ENCODE measurements at regions of chr4 and their contacts with region 1.

Region 1: DNA sequence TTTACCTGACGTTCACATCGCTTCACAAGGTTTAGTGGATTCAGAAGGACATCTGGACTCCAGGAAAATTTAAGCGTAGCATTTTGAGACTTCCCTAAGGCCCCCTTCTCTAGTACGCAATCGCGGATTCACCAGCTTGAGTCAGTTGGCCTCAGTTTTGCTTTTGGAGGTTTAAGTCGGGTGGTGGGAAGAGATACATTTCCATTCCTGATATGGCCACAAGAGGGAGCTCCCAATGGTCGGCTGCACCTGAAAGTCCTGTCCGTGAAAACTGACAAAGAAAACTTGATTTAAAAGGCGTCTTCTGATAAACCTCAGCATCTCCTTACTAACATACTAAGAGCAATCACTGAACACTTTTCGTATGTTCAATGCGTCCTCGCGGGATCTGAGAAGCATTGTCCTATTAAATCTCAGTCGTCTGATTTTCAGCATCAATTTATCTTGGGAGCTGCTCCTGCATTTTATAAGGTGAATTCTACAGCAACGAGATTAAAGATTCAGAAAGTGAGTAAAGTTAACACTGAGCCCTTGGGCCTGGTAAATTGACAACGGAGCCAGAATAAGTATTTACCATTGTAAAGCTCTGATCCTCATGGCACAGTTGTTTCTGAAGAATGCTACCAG is 50.6 kb downstream of the LGI2 start:
- DNase-seq: peak; percentile 5 to 57 (median 28)
- H3K4me3 ChIP-seq: no peak overlapping the region
- H3K4me3 Mint-ChIP-seq: peak overlapping the region in 4 of 7 donors; percentile 17 to 64 (median 46)
- H3K27ac ChIP-seq: no peak overlapping the region
- H3K27ac Mint-ChIP-seq: no peak overlapping the region
- H3K4me1 ChIP-seq: peaks cover 4% of the 10 kb centered on the region
- H3K4me1 Mint-ChIP-seq: peaks cover 6 to 11% (median 10%) of the 10 kb centered on the region in 3 donors
- H3K27me3 ChIP-seq: no peaks in the 10 kb centered on the region
- H3K27me3 Mint-ChIP-seq: peaks cover 19 to 41% of the 10 kb centered on the region in 2 donors

Region 2: GRCh38 chr4:24809376-24809775 is 170.8 kb before region 1 on chr4:
- CTCF ChIA-PET with region 1: no interaction called
- POLR2A ChIA-PET with region 1: no interaction called
- DNase-seq: no peak
- H3K4me3 ChIP-seq: no peak overlapping the region
- H3K4me3 Mint-ChIP-seq: no peak overlapping the region
- H3K27ac ChIP-seq: no peak overlapping the region
- H3K27ac Mint-ChIP-seq: no peak overlapping the region
- H3K4me1 ChIP-seq: no peaks in the 10 kb centered on the region
- H3K4me1 Mint-ChIP-seq: peaks cover 0 to 5% (median 0%) of the 10 kb centered on the region in 3 donors
- H3K27me3 ChIP-seq: no peaks in the 10 kb centered on the region
- H3K27me3 Mint-ChIP-seq: peaks cover 0 to 5% of the 10 kb centered on the region in 2 donors

Region 3: DNA sequence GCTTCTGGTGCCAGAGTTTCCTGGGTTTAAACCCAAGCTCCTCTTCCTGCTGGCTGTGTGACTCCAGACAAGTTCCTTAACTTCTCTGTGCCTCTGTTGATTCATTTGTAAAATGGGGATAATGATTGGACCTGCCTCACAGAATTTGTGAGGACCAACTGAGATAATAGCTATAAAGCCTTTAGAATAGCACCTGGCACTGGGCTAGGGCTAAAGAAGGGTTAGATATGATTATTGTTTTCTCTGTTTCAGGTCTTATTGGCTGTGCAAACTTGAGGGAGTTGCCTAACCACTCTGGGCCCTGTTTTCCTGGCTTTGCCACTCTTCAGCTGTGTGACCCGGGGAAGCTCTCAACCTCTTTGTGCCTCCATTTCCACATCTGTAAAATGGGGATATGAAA is 12.8 kb after region 1 on chr4:
- CTCF ChIA-PET with region 1: interaction called, 11 read pairs
- POLR2A ChIA-PET with region 1: no interaction called
- DNase-seq: no peak
- H3K4me3 ChIP-seq: no peak overlapping the region
- H3K4me3 Mint-ChIP-seq: no peak overlapping the region
- H3K27ac ChIP-seq: no peak overlapping the region
- H3K27ac Mint-ChIP-seq: no peak overlapping the region
- H3K4me1 ChIP-seq: no peaks in the 10 kb centered on the region
- H3K4me1 Mint-ChIP-seq: no peaks in the 10 kb centered on the region
- H3K27me3 ChIP-seq: no peaks in the 10 kb centered on the region
- H3K27me3 Mint-ChIP-seq: no peaks in the 10 kb centered on the region

Region 4: GRCh38 chr4:25367004-25367621 is 386.9 kb after region 1 on chr4:
- CTCF ChIA-PET with region 1: interaction called, 29 read pairs
- POLR2A ChIA-PET with region 1: no interaction called
- DNase-seq: no peak
- H3K4me3 ChIP-seq: no peak overlapping the region
- H3K4me3 Mint-ChIP-seq: no peak overlapping the region
- H3K27ac ChIP-seq: no peak overlapping the region
- H3K27ac Mint-ChIP-seq: no peak overlapping the region
- H3K4me1 ChIP-seq: no peaks in the 10 kb centered on the region
- H3K4me1 Mint-ChIP-seq: no peaks in the 10 kb centered on the region
- H3K27me3 ChIP-seq: no peaks in the 10 kb centered on the region
- H3K27me3 Mint-ChIP-seq: no peaks in the 10 kb centered on the region

Measured in CD8-positive, alpha-beta memory T cell (primary cell).